ENCODE measurements at regions of chr7 and their contacts with region 1.

Region 1: GRCh38 chr7:156949541-156950380 is at the start of gene NOM1:
- DNase-seq: peak; percentile 99
- H3K4me3 ChIP-seq: peak within 1 kb of the TSS; percentile 85 to 94
- H3K27ac ChIP-seq: peak within 1 kb of the TSS; percentile 63 to 71
- H3K4me1 ChIP-seq: peaks cover 5 to 21% of the 10 kb centered on the region in 2 experiments; a peak in 3 of 4 replicates
- H3K27me3 ChIP-seq: no peaks in the 10 kb centered on the region
- CTCF ChIP-seq: peak; percentile 63
- EP300 ChIP-seq: no peak
- RAD21 ChIP-seq: peak; percentile 48
- polyA plus RNA-seq, gene NOM1: 18.1 and 21.2 TPM in 2 replicates

Region 2: DNA sequence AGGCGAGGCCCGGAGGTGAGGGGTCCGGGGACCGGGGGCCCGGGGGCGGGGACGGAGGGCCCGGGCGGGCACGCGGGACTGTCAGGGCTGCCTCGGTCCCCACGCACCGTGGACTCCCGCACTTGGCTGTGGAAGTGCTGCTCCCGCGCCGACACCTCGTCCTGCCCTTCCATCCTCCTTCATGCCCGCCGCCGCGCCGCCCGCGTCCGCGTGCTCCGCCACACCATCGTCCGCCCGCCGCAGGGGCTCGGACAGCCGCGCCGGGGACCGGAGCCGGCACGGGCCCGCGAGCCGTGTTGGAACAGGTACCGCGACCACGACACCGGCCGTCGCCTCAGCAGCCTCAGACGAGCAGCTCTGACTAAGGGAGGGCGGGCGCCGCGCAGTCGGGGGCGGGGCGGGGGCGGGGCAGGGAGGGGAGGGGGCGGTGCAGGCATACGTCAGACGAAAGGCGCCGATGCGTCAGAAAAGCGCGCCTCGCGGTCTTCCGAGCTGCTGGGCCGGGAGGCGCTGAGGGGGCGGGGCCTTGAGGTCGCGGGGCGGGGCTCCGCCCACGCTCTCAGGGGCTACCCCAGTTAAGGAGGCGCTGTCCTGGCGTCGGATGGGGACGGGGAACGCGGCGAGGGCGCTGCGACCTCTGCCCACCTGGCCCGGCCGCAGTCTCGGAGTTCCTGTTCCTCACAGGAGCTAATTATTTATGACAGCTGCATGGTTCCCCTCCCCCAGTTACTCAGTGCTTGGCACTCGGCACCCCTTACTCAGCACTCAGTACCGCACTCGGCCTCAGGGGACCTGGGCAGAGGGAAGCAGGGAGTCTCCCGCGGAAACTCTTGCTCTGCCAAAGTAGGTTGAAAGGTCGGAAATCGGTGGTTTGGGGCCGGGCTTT is 56.7 kb before region 1 on chr7 and contains the start of gene LMBR1:
- CTCF ChIA-PET with region 1: interaction called, 16 read pairs
- POLR2A ChIA-PET with region 1: no interaction called
- DNase-seq: peak; percentile 100
- H3K4me3 ChIP-seq: peak within 1 kb of the TSS; percentile 82 to 98
- H3K27ac ChIP-seq: peak within 1 kb of the TSS; percentile 61 to 87
- H3K4me1 ChIP-seq: peaks cover 6 to 9% of the 10 kb centered on the region in 2 experiments; a peak in 3 of 4 replicates
- H3K27me3 ChIP-seq: no peaks in the 10 kb centered on the region
- CTCF ChIP-seq: peak; percentile 64
- EP300 ChIP-seq: no peak
- RAD21 ChIP-seq: no peak
- polyA plus RNA-seq, gene LMBR1: 20.0 and 24.6 TPM in 2 replicates

Region 3: DNA sequence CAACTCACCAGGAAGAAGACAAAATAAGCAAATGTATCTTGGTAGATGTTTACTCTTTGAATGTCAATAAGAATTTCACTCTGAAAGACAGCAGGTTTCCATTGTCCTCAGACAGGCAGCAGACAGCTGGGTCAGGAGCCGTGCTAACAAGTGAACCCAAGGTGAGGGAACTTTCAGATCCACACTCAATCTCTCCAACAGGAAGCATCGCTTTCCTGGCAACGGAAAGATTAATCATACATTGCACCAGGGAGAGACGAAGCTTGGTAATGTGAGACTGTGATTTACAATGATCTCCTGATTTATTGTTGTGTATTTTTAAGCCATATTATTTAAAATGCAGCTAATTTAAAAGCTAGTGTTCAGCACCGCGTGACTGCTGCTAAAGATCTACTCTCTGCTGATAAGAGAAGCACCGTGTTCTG is 17.8 kb before region 1 on chr7:
- CTCF ChIA-PET with region 1: interaction called, 24 read pairs
- POLR2A ChIA-PET with region 1: no interaction called
- DNase-seq: no peak
- H3K4me3 ChIP-seq: no peak overlapping the region
- H3K27ac ChIP-seq: no peak overlapping the region
- H3K4me1 ChIP-seq: peaks cover 0 to 11% of the 10 kb centered on the region in 2 experiments; a peak in 1 of 4 replicates
- H3K27me3 ChIP-seq: no peaks in the 10 kb centered on the region
- CTCF ChIP-seq: no peak
- EP300 ChIP-seq: no peak
- RAD21 ChIP-seq: no peak

Region 4: DNA sequence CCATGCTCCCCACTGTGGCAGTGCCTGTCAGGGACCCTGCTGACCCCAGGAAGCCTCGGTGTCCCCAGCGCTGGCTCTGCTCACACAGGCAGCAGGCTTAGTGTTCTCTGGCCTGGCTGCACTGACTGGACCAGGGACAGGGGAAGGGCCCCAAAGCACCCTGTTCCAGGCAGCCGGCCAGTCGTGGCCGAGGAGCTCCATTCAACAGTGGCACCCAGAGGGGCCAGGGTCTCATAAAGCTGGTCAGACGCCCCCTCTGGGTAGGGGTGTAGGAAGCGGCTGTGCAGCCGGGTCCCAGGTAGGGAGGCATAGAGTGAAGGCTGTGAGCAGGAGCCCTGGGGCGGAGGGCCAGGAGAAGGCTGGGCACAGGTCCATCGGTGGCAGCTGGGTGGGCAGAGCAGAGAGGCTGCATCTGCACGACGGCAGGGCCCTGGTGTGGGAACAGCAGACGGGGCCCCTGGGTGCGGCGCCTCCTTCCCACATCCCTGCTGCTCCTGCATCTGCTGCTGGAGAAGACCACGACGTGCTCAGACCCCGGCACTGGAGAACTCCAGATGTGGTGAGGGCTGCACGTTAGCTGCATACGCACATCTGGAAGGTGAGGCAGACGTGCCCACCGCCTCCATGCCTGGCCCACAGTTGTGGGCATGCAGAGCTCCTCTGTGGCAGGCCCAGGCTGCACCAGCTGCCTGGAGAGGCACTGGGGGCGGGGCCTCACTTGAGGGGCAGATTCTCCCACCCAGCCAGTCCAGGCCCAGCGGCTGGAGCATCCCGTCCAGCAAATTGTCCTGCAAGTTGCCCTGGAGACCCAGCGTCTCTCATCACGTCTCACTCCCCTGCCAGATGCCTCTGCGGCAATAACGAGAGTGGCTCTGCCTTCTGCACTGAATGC is 35.6 kb after region 1 on chr7:
- CTCF ChIA-PET with region 1: interaction called, 11 read pairs
- POLR2A ChIA-PET with region 1: interaction called, 3 read pairs
- DNase-seq: peak; percentile 42
- H3K4me3 ChIP-seq: no peak overlapping the region
- H3K27ac ChIP-seq: no peak overlapping the region
- H3K4me1 ChIP-seq: no peaks in the 10 kb centered on the region; a peak in 1 of 4 replicates
- H3K27me3 ChIP-seq: 0 out of 2 replicates have a peak, but pooled peaks cover under 1% of the 10 kb centered on the region
- CTCF ChIP-seq: no peak
- EP300 ChIP-seq: no peak
- RAD21 ChIP-seq: no peak

Region 5: GRCh38 chr7:157336383-157337315 is 386.9 kb after region 1 on chr7 and contains the start of gene DNAJB6:
- CTCF ChIA-PET with region 1: interaction called, 12 read pairs
- POLR2A ChIA-PET with region 1: no interaction called
- DNase-seq: peak; percentile 100
- H3K4me3 ChIP-seq: peak within 1 kb of the TSS; percentile 62 to 81
- H3K27ac ChIP-seq: peak within 1 kb of the TSS; percentile 76 to 89
- H3K4me1 ChIP-seq: peaks cover 20% of the 10 kb centered on the region in 2 experiments
- H3K27me3 ChIP-seq: no peaks in the 10 kb centered on the region
- CTCF ChIP-seq: no peak
- EP300 ChIP-seq: peak; percentile 39 to 94; a peak in 3 of 4 replicates
- RAD21 ChIP-seq: no peak
- polyA plus RNA-seq, gene DNAJB6: 176 and 185 TPM in 2 replicates